ENCODE measurements at regions of chr7 and their contacts with region 1.

Region 1: GRCh38 chr7:150787321-150788281 is 12.6 kb downstream of the TMEM176B start:
- DNase-seq: no peak
- H3K4me3 Mint-ChIP-seq: no peak overlapping the region
- H3K27ac Mint-ChIP-seq: no peak overlapping the region
- H3K4me1 Mint-ChIP-seq: no peaks in the 10 kb centered on the region
- H3K27me3 Mint-ChIP-seq: peaks cover 20% of the 10 kb centered on the region
- CTCF ChIP-seq: no peak

Region 2: DNA sequence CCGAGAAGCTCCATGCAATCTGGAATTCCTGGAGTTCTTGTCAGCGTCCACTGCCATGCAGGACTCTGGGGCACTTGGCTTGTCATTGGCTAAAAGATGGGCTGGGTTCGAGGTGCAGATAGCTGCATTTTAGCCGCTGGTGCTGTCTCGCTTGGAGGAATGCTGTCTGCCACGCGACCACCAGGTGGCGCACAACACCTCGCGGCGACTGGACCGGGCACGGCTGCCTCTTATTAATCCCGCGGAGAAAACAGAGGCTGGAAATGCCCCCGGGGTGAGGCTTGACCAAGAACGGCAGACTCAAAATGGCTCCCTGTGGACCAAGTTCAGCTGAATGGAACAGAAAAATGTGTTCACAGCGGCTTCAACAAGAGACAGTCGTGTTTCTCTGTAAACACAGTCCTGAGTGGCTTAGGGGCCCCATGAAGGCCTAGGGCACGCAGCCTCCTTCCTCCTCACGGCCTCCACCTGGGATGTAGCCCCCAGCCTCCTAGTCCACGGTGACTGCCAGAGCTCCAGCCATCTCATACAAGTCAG is 110.9 kb after region 1 on chr7:
- CTCF ChIA-PET with region 1: no interaction called
- intact Hi-C with region 1: no loop called
- DNase-seq: peak; percentile 89
- H3K4me3 Mint-ChIP-seq: peak overlapping the region; percentile 22
- H3K27ac Mint-ChIP-seq: no peak overlapping the region
- H3K4me1 Mint-ChIP-seq: peaks cover 66% of the 10 kb centered on the region
- H3K27me3 Mint-ChIP-seq: peaks cover 29% of the 10 kb centered on the region
- CTCF ChIP-seq: peak; percentile 94

Region 3: GRCh38 chr7:150988230-150989226 is 200.9 kb after region 1 on chr7:
- CTCF ChIA-PET with region 1: no interaction called
- intact Hi-C with region 1: loop called (anchors 10 kb)
- DNase-seq: no peak
- H3K4me3 Mint-ChIP-seq: no peak overlapping the region
- H3K27ac Mint-ChIP-seq: no peak overlapping the region
- H3K4me1 Mint-ChIP-seq: peaks cover 25% of the 10 kb centered on the region
- H3K27me3 Mint-ChIP-seq: peaks cover 44% of the 10 kb centered on the region
- CTCF ChIP-seq: peak; percentile 62

Region 4: GRCh38 chr7:151432791-151433521 is 645.4 kb after region 1 on chr7:
- CTCF ChIA-PET with region 1: no interaction called
- intact Hi-C with region 1: no loop called
- DNase-seq: no peak
- H3K4me3 Mint-ChIP-seq: no peak overlapping the region
- H3K27ac Mint-ChIP-seq: no peak overlapping the region
- H3K4me1 Mint-ChIP-seq: peaks cover 7% of the 10 kb centered on the region
- H3K27me3 Mint-ChIP-seq: peaks cover 33% of the 10 kb centered on the region
- CTCF ChIP-seq: peak; percentile 28